SK-MEL-5 (cell line): ENCODE measurements at regions of chr7 and their contacts with region 1.

Region 1: DNA sequence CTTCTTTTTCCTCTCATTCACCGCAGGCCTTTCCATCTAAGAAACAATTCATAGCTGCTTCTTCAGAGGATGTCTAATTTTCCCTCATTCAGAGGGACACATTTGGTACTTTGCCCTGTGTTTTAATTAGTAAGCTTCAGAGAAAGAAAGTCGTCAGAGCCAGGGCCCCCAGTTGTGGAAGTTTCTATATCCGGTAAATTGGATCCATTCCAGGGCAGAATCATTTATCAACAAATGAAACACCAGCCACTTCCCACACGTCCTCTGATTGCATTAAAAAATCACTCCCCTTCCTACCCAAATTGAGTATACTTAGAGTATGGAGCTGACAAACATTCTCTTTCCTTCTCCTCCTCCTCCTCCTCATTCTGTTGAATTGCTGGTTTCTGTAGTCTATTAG is 205.8 kb upstream of the HDAC9 start:
- DNase-seq: no peak

Region 2: DNA sequence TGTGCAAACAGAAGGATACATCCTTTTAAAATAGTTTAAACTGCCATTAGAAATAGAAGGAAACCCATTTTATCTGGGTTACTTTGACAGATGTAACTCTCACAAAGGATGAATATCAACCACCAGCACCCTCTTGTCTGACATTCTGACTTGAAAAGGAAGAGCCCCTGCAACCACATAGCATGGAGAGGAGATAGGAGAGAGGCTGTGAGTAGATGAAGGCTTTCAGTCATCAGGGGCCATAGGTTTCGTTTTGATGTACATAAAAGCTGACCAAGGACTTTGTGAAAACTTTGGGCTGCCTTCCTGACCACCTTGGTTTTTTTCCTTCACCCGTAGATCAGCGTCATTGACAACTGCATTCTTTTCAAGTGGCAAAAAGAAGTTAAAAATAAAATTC is 50.6 kb before region 1 on chr7:
- in situ Hi-C with region 1: loop called (anchors 10 kb)
- DNase-seq: no peak